ENCODE measurements at regions of chr2 and their contacts with region 1.

Region 1: DNA sequence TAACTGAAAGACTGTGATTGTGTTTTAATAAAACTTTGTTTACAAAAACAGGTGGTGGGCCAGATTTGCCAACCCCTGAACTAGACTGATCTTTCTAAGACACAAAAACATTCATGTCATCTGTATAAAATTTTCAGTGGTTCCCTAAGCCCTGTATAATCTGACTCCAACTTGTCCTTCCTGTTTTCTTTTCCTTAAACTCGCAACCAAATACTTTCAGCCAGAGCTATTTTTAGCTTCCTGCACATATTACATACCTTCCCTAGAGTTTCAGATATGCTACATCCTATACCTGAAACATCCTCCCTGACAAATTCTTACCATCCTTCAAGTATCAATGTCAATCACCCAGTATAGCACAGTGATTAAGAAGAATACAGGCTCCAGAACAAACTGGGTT is 4.8 kb downstream of the GCFC2 start:
- DNase-seq: no peak
- ATAC-seq: no peak
- H3K4me3 ChIP-seq: no peak overlapping the region
- H3K27ac ChIP-seq: no peak overlapping the region
- H3K4me1 ChIP-seq: peaks cover 4% of the 10 kb centered on the region
- H3K27me3 ChIP-seq: no peaks in the 10 kb centered on the region
- CTCF ChIP-seq: no peak

Region 2: DNA sequence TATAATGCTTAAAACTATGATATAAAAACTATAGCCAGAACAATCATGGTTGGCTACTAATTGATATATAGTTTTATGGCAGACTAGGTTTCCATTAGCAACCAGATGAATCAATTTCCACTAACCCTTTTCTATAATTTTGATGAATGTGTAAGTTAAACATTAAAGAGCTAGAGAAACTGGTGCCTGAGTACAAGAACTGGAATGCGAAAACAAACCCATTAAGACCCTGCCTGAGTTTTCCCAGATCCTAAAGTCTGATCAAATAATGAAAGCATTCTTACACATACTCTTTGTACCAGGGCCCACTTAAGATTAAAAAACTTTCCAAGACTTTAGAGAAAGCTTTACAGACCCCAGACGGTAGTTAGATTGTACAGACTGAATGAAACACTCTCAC is 38.0 kb before region 1 on chr2:
- CTCF ChIA-PET with region 1: no interaction called
- POLR2A ChIA-PET with region 1: interaction called, 10 read pairs
- in situ Hi-C with region 1: no loop called
- intact Hi-C with region 1: no loop called
- DNase-seq: no peak
- ATAC-seq: no peak
- H3K4me3 ChIP-seq: no peak overlapping the region
- H3K27ac ChIP-seq: no peak overlapping the region
- H3K4me1 ChIP-seq: no peaks in the 10 kb centered on the region
- H3K27me3 ChIP-seq: no peaks in the 10 kb centered on the region
- CTCF ChIP-seq: no peak

Region 3: DNA sequence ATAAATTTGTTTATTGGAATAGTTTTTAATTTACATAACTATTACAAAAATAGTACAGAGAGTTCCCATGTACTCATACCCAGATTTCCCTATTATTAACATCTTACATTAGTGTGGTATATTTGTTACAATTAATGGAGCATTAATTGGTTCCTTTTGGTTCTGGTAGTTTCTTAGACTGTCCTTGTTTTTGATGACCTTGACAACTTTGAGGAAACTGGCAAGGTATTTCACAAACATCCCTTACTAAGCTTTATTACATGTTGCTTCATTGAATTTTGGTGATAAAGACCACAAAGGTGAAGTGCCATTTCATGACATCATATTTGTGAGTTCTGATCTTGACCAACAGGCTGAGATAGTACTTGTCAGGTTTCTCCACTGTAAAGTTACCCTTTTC is 383.8 kb after region 1 on chr2:
- CTCF ChIA-PET with region 1: no interaction called
- POLR2A ChIA-PET with region 1: no interaction called
- in situ Hi-C with region 1: no loop called
- intact Hi-C with region 1: no loop called
- DNase-seq: no peak
- ATAC-seq: no peak
- H3K4me3 ChIP-seq: no peak overlapping the region
- H3K27ac ChIP-seq: no peak overlapping the region
- H3K4me1 ChIP-seq: no peaks in the 10 kb centered on the region
- H3K27me3 ChIP-seq: no peaks in the 10 kb centered on the region
- CTCF ChIP-seq: no peak